ENCODE measurements at regions of chr9 and their contacts with region 1.

Region 1: GRCh38 chr9:3308609-3309008 is 217.2 kb downstream of the RFX3 start:
- DNase-seq: no peak
- H3K4me3 ChIP-seq: no peak overlapping the region
- H3K27me3 ChIP-seq: no peaks in the 10 kb centered on the region
- CTCF ChIP-seq: no peak

Region 2: DNA sequence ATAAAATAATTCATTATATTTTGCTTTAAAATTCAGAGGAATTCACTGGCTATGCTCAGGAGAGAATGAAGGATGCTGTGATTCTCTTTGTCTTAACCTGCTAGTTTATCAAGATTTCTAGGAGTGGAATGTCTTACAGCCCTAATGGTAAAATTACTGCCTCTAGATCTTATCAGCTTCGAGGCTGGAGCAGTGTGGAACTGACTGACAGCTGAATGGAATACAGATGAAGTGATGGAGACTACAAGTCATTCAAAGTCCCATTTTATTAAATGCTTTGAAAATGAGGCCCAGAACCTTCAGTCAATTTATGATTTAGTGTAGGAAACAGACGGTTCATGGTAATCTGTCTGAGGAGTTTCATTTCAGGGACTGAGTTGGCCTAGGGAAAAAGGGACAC is 15.1 kb after region 1 on chr9:
- CTCF ChIA-PET with region 1: no interaction called
- POLR2A ChIA-PET with region 1: no interaction called
- DNase-seq: no peak
- H3K4me3 ChIP-seq: no peak overlapping the region
- H3K27me3 ChIP-seq: no peaks in the 10 kb centered on the region
- CTCF ChIP-seq: no peak

Region 3: DNA sequence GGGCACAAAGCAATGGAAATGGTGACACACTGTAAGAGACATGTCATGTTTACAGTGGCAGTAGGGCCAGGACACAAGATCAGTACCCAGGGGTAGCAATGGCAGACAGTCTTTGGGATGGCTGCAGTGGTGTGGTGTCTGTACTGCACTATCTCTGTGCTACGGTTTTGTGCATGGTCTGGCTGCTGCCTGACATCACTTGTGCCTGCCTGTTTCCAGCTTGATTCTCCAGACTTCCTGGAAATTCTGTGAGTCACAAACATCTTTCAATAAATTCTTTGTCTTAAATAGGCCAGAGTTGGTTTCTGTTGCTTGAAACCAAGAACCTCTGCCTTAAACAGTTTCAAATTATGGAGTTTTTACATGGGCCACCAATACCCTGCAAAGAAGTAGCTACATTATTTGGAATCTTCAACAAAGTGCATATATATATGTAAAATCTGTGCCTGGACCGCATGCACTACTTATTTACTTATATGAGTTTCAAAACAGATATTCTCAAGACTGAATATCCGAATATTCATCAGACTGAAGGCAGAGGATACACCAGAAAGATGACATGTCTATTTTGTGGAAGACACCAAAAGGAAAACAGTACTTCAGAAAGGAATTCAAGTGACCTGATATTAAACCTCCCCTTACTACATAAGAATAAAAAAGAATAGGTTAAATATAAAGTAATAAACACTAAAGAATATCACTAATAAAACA is 29.1 kb after region 1 on chr9:
- CTCF ChIA-PET with region 1: interaction called, 3 read pairs
- POLR2A ChIA-PET with region 1: interaction called, 11 read pairs
- DNase-seq: peak; percentile 15
- H3K4me3 ChIP-seq: no peak overlapping the region
- H3K27me3 ChIP-seq: no peaks in the 10 kb centered on the region
- CTCF ChIP-seq: no peak